Ovary (tissue), 10 donors: ENCODE measurements at regions of chr1 and their contacts with region 1.

Region 1: GRCh38 chr1:218996362-218996761 is 177.3 kb upstream of the LYPLAL1 start:
- DNase-seq: no peak
- H3K4me3 ChIP-seq: no peak overlapping the region
- H3K27ac ChIP-seq: no peak overlapping the region
- H3K4me1 ChIP-seq: no peaks in the 10 kb centered on the region
- H3K27me3 ChIP-seq: no peaks in the 10 kb centered on the region
- CTCF ChIP-seq: no peak
- EP300 ChIP-seq: no peak
- POLR2A ChIP-seq: no peak

Region 2: GRCh38 chr1:218959784-218960183 is 36.6 kb before region 1 on chr1:
- intact Hi-C with region 1: loop called in 1 of 4 experiments (anchors 2 kb)
- DNase-seq: no peak
- H3K4me3 ChIP-seq: no peak overlapping the region
- H3K27ac ChIP-seq: no peak overlapping the region
- H3K4me1 ChIP-seq: no peaks in the 10 kb centered on the region
- H3K27me3 ChIP-seq: no peaks in the 10 kb centered on the region
- CTCF ChIP-seq: no peak
- EP300 ChIP-seq: no peak
- POLR2A ChIP-seq: no peak